ENCODE measurements at regions of chr3 and their contacts with region 1.

Region 1: GRCh38 chr3:184371570-184372018 is 6.4 kb downstream of the THPO start:
- DNase-seq: peak; percentile 87 to 90
- H3K4me3 ChIP-seq: no peak overlapping the region
- H3K27ac ChIP-seq: no peak overlapping the region
- H3K4me1 ChIP-seq: peaks cover 15 to 16% of the 10 kb centered on the region in 2 donors
- H3K27me3 ChIP-seq: no peaks in the 10 kb centered on the region
- CTCF ChIP-seq: peak; percentile 78 to 97 (median 96)
- POLR2A ChIP-seq: no peak

Region 2: GRCh38 chr3:184513276-184514170 is 141.9 kb after region 1 on chr3:
- intact Hi-C with region 1: loop called (anchors 5 kb)
- DNase-seq: peak; percentile 85 to 88
- H3K4me3 ChIP-seq: peak overlapping the region in 1 of 3 donors; percentile 17
- H3K27ac ChIP-seq: no peak overlapping the region
- H3K4me1 ChIP-seq: peaks cover 0 to 20% of the 10 kb centered on the region in 2 donors
- H3K27me3 ChIP-seq: no peaks in the 10 kb centered on the region
- CTCF ChIP-seq: peak; percentile 63 to 94 (median 80)
- POLR2A ChIP-seq: no peak

Region 3: DNA sequence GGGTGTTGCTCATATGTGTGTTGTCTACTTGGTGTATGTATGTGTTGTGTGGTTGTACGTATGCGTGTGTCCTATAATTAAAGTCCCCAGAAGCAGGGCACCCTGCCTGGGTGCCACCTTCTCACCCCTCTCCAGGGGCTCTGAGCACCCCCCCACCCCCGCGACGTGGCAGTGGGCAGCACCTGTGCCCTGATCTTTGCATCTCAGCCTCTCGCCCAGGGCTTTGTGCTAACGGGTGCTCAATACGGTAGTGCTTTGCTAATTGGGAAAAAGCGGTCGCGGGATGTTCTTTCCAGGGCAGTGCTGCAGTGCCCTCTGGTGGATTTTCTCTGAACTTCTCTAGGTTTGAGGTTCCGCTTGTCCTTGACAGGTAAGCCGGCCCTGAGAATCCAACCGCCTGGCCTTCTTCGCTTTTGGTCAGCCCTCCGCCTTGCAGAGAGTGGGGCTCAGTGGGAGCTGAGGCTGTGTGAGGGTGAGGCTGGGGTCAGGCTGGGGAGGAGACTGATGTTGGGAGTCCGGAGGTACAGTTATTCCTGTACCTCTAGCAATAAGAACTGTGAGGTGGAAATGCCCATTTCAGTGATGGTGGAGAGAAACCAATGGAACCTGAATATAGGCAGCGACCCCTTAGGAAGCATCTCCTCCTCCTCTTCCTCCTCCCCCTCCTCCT is 172.4 kb after region 1 on chr3:
- intact Hi-C with region 1: loop called (anchors 10 kb)
- DNase-seq: peak; percentile 71 to 72
- H3K4me3 ChIP-seq: no peak overlapping the region
- H3K27ac ChIP-seq: no peak overlapping the region
- H3K4me1 ChIP-seq: peaks cover 0 to 5% of the 10 kb centered on the region in 2 donors
- H3K27me3 ChIP-seq: no peaks in the 10 kb centered on the region
- CTCF ChIP-seq: peak; percentile 79 to 94 (median 82)
- POLR2A ChIP-seq: no peak